Heart right ventricle (tissue), 16 donors: ENCODE measurements at regions of chr1 and their contacts with region 1.

Region 1: DNA sequence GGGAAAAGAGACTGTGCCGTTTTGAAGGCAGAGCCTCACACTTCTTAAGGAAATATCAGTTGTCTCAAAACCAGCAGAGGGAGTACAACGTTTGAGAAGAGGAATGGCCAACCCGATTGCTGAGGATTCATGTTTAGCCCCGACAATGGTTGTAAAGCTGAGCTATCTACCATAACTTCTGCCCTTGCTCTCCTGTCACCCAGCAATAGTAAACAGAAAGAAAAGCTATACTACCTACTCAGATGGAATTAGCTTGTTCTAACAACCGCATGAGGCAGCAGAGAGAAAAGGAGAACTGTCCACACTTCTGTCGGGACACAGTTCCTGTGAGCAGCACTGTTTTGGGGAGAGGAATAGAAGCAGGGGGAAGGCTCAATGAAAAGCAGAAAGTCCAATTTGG is 91.2 kb downstream of the SLC45A1 start:
- DNase-seq: peak in 1 of 2 donors; percentile 44
- ATAC-seq: peak; percentile 24 to 70 (median 54)
- H3K4me3 ChIP-seq: peak overlapping the region in 1 of 10 donors; percentile 5
- H3K27ac ChIP-seq: peak overlapping the region; percentile 63 to 96 (median 84)
- H3K4me1 ChIP-seq: peaks cover 53 to 97% (median 81%) of the 10 kb centered on the region in 9 donors
- H3K27me3 ChIP-seq: no peaks in the 10 kb centered on the region
- CTCF ChIP-seq: peak; percentile 15 to 67 (median 45)

Region 2: GRCh38 chr1:8276173-8276914 is 132.8 kb before region 1 on chr1:
- intact Hi-C with region 1: no loop called
- DNase-seq: no peak
- ATAC-seq: no peak
- H3K4me3 ChIP-seq: no peak overlapping the region
- H3K27ac ChIP-seq: no peak overlapping the region
- H3K4me1 ChIP-seq: no peaks in the 10 kb centered on the region
- H3K27me3 ChIP-seq: peaks cover 0 to 7% (median 3%) of the 10 kb centered on the region in 7 donors
- CTCF ChIP-seq: no peak

Region 3: DNA sequence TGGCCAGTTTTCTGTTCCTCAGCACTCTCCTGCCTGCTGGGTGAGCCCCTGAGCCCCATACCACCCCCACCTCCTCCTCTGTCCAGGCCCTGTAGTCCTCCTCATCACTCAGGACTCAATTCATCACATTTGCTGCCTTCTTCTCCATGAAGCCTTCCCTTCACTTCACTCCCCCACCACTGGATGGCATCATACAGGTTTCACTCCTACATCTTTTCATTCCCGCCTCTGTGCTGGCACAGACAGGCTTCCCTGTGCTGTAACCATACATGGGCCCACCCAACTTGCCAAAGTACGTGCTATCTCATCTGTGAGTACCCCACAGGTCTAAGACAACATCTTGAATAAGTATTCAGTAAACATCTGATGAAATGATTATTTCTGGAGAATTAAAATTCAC is 34.3 kb before region 1 on chr1:
- intact Hi-C with region 1: loop called in 5 of 10 experiments (anchors 5 kb)
- DNase-seq: peak in 1 of 2 donors; percentile 16
- ATAC-seq: no peak
- H3K4me3 ChIP-seq: no peak overlapping the region
- H3K27ac ChIP-seq: peak overlapping the region; percentile 83 to 93 (median 88)
- H3K4me1 ChIP-seq: peaks cover 47 to 96% (median 82%) of the 10 kb centered on the region in 9 donors
- H3K27me3 ChIP-seq: no peaks in the 10 kb centered on the region
- CTCF ChIP-seq: peak in 7 of 9 donors; percentile 24 to 47 (median 37)

Region 4: DNA sequence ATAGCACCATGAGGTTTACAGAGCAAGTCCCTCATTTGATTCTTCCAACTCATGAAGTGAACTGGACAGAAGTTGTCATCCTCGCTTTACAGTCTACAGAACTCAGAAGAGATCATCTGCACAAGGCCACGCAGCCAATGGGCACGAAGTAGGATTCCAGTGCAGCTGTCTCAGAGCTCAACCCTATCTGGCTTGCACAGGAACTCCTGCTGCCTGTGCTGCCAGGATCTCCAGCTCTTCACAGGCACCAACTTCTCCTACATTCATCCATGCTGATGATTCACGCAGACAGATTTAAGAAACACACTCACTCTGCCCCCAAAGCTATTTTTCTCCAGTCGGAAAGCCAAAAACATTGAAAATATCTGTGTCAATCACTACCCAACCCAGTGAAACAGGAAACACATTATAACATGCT is 251.3 kb after region 1 on chr1:
- intact Hi-C with region 1: loop called in 1 of 10 experiments (anchors 10 kb)
- DNase-seq: peak; percentile 30 to 39
- ATAC-seq: peak; percentile 60 to 93 (median 78)
- H3K4me3 ChIP-seq: no peak overlapping the region
- H3K27ac ChIP-seq: peak overlapping the region in 9 of 10 donors; percentile 38 to 79 (median 75)
- H3K4me1 ChIP-seq: peaks cover 13 to 76% (median 64%) of the 10 kb centered on the region in 9 donors
- H3K27me3 ChIP-seq: no peaks in the 10 kb centered on the region
- CTCF ChIP-seq: no peak